IMR-90 (cell line): ENCODE measurements at regions of chr5 and their contacts with region 1.

Region 1: DNA sequence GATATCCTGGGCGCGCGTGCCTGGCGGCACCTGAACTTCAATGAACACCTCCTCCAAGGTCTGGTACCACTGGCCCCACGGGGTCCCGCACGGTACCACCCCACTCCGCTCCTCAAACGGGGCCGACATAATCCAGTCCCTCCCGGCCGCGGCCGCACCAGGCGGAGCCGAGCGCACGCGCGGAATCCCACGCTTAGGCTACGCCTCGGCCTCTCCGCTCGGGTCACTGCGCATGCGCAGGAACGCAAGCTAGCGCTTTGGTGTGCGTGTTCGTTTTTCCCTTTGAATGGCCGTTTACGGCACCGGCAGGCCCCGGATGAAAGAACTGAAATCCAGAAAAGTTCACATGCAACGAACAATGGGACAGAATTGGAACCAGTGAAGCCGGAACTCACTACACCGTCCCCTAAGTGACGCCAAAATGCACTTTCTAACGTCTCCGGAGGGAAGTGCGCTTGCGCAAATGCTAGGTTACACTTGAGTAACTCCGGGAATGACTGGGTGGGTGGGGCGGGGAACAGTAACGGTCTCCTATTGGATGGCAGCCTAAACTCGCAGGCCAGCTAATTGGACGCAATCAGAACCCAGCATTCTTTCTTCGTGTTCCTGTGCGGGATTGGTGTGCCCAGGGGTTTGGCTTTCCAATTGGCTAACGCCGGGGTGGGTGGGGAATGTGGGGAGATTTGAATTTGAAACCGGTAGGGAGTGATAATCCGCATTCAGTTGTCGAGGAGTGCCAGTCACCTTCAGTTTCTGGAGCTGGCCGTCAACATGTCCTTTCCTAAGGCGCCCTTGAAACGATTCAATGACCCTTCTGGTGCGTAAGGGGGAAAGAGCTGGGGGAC is at the starts of genes HMMR and NUDCD2:
- DNase-seq: peak; percentile 99
- ATAC-seq: peak; percentile 90
- H3K4me3 ChIP-seq: peak within 1 kb of the TSS; percentile 65
- H3K27ac ChIP-seq: peak within 1 kb of the TSS; percentile 89
- H3K4me1 ChIP-seq: no peaks in the 10 kb centered on the region
- H3K27me3 ChIP-seq: no peaks in the 10 kb centered on the region
- CTCF ChIP-seq: no peak
- POLR2A ChIP-seq: peak; percentile 82
- RAD21 ChIP-seq: no peak
- total RNA-seq, gene HMMR: 24.6 and 30.3 TPM in 2 replicates
- total RNA-seq, gene NUDCD2: 3.0 and 4.2 TPM in 2 replicates

Region 2: GRCh38 chr5:163503106-163504078 is 43.2 kb after region 1 on chr5:
- CTCF ChIA-PET with region 1: no interaction called
- POLR2A ChIA-PET with region 1: no interaction called
- dilution Hi-C with region 1: no loop called
- in situ Hi-C with region 1: no loop called
- intact Hi-C with region 1: loop called (anchors 1 kb)
- DNase-seq: peak; percentile 82
- ATAC-seq: peak; percentile 16
- H3K4me3 ChIP-seq: peak overlapping the region; percentile 49
- H3K27ac ChIP-seq: peak overlapping the region; percentile 82
- H3K4me1 ChIP-seq: peaks cover 2% of the 10 kb centered on the region
- H3K27me3 ChIP-seq: no peaks in the 10 kb centered on the region
- CTCF ChIP-seq: peak; percentile 43
- POLR2A ChIP-seq: no peak
- RAD21 ChIP-seq: peak; percentile 51